ENCODE measurements at regions of chr4 and their contacts with region 1.

Region 1: DNA sequence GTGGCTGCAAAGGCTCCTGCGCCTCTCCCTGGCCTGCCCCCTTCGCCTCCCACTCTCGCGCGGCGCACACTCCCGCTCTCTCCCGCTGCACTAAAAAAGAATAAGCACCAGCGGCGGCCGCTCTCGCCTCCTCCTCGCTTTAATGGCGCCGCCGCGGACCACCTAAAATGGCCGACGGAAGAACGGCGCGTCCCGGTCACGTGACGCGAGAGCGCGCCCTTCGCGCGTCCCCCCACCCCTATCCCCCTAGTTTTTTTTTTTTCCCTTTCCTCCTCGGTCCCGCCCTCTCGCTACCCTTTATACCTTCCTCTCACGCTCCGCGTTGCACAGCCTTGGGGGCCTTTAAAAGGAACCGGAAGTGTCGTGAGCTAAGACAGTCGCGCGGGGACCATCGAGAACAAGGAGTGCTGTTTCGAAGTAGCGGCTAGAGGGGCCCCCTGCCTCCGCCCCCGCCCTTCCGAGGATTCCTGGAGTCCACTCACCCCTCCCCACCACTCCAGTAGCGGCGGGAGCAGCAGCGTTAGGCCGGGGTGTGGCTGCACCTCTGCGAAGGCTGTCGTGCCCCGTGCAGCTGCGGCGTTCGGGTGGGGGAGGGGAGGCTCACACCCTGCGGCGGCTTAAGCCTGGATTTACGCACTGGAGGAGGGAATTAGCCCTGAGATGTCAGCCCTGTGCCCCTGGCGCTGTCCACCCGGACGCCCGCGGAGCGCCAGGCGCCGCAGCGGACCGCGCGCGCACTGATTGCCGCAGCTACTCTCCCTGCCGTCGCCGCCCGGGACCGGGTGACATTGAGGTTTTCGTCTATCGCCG is at the start of gene HNRNPD:
- DNase-seq: peak; percentile 98 to 99
- ATAC-seq: peak; percentile 98
- H3K4me3 ChIP-seq: peak within 1 kb of the TSS; percentile 85 to 88
- H3K27ac ChIP-seq: peak within 1 kb of the TSS; percentile 78 to 84
- H3K4me1 ChIP-seq: no peaks in the 10 kb centered on the region
- H3K27me3 ChIP-seq: no peaks in the 10 kb centered on the region
- total RNA-seq, gene HNRNPD: 120 to 146 TPM

Region 2: GRCh38 chr4:82284858-82285805 is 88.9 kb before region 1 on chr4:
- intact Hi-C with region 1: loop called in 1 of 2 experiments (anchors 10 kb)
- DNase-seq: peak; percentile 100
- ATAC-seq: peak; percentile 100
- H3K4me3 ChIP-seq: peak overlapping the region in 1 of 2 donors; percentile 38
- H3K27ac ChIP-seq: no peak overlapping the region
- H3K4me1 ChIP-seq: no peaks in the 10 kb centered on the region
- H3K27me3 ChIP-seq: no peaks in the 10 kb centered on the region

Region 3: DNA sequence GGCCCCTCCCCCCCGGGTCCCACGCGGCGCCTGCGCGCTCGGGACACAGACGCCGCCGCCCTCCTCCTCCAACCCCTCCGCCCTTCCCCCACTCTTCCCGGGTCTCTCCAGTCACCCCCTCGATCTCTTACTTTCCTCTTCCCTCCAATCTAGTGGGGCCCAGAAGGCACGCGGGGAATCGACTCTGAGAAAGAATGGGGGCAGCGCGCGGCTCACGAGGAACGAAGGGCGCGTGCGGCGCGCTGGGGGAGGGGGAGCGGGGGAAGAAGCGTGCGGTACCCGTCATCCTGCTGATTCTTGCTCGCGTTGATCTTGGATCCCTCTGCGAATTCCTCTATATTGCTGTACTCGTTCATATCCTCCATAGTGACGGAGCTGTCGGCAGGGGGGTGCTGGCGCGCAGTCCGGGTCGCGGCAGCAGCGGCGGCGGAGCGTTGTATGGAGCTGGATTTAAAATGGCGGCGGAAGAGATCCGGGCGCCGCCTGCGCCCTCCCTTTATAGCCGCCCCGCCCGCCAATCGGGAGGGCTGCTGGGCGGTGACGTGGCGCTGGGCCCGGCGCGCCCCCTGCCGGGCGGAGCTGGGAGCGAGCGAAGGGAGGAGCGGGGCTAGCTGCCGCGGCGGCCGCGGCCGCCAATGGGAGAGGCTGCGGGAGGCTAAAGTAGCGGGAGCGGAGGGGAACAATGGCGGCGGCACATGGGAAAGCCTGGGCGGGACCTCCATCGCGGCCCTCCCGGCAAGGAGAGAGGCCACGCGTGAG is 55.1 kb after region 1 on chr4:
- intact Hi-C with region 1: loop called (anchors 1 to 2 kb)
- DNase-seq: peak; percentile 94 to 97
- ATAC-seq: peak; percentile 96
- H3K4me3 ChIP-seq: peak overlapping the region; percentile 90 to 93
- H3K27ac ChIP-seq: peak overlapping the region in 1 of 2 donors; percentile 97
- H3K4me1 ChIP-seq: peaks cover 0 to 6% of the 10 kb centered on the region in 2 donors
- H3K27me3 ChIP-seq: no peaks in the 10 kb centered on the region

Region 4: GRCh38 chr4:82500106-82500965 is 126.3 kb after region 1 on chr4:
- intact Hi-C with region 1: no loop called
- DNase-seq: no peak
- ATAC-seq: no peak
- H3K4me3 ChIP-seq: no peak overlapping the region
- H3K27ac ChIP-seq: no peak overlapping the region
- H3K4me1 ChIP-seq: no peaks in the 10 kb centered on the region
- H3K27me3 ChIP-seq: no peaks in the 10 kb centered on the region

Region 5: DNA sequence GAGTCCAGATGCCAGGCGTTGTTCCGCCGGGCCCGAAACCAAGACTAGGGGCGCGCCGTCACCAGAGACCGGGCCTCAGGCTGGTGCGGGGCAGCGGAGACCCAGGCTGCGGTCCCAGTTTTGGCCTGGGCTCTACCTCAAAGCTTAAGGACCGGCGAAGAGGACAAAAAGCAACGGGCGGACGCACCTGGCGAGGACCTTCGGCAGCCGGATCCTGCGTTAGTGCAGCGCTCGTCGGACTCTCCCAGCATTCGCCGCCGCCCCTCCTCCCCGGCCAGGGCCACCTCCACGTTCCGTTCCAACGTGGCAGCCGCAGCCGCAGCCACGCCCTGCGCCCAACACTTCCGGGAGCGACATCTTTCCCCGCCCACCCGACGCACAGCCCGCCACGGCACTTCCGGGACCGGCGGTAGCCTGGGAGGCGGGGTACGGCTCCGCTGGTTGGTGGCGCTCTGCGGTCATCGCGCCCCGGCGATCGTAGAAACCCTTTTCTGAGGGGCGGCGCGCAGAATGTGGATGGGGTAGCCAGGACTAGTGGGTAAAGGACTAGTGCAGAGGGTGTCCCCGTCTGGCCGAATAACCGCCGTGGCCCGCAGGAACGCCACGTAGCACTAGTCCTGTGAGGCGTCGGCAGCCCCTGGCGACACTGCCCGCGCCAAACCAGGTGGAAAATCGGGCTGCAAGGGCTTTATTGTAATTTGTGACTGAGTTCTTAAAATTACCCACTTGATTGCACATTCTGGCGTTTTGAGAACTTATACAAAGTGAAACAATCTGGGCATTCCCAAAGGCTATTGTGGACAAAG is 517.1 kb after region 1 on chr4 and contains the start of gene SEC31A:
- intact Hi-C with region 1: loop called in 1 of 2 experiments (anchors 10 kb)
- DNase-seq: peak; percentile 98 to 99
- ATAC-seq: peak; percentile 100
- H3K4me3 ChIP-seq: peak within 1 kb of the TSS; percentile 85 to 94
- H3K27ac ChIP-seq: peak within 1 kb of the TSS; percentile 86 to 99
- H3K4me1 ChIP-seq: peaks cover 0 to 1% of the 10 kb centered on the region in 2 donors
- H3K27me3 ChIP-seq: no peaks in the 10 kb centered on the region
- total RNA-seq, gene SEC31A: 297 to 338 TPM

Region 6: DNA sequence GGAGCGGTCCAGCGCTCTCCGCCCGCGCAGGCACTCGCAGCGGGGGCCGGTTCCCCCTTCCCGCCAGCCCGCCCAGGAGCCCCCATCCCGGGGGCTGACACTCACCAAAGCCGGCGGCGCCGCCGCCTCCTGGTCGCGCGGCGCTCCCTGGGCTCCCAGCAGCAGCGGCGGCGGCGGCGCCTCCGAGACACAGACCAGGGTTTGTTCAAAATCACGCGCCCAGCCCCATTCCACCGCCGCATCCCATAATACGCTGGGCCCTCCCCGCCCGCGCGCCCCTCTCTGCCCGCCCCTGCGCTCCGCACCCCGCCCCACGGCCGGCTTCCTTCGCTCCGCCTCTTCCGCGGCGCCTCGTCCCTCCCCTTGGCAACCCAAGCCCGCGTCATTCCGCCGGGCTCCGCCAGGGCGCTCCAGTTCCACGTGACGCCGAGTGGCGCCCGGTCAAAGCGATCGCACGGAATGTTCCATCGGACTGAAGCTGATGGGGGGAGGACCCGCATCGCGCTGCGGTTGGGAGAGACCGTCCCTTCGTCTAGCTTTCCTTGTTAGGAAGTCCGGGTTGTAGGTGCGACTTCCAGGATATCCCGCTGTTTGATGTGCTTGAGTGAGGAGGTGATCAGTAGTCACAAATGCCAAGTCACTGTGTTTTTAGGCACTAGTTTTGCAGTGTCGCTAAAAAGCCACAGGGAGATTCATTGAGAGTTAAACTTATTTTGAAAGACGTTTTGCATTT is 638.8 kb after region 1 on chr4:
- intact Hi-C with region 1: loop called (anchors 5 to 10 kb)
- DNase-seq: peak; percentile 98 to 99
- ATAC-seq: peak; percentile 99
- H3K4me3 ChIP-seq: peak overlapping the region; percentile 82 to 99
- H3K27ac ChIP-seq: peak overlapping the region; percentile 46 to 89
- H3K4me1 ChIP-seq: no peaks in the 10 kb centered on the region
- H3K27me3 ChIP-seq: no peaks in the 10 kb centered on the region

Region 7: GRCh38 chr4:83455281-83456129 is 1081.5 kb after region 1 on chr4 and contains the starts of genes HELQ and MRPS18C:
- intact Hi-C with region 1: loop called in 1 of 2 experiments (anchors 10 kb)
- DNase-seq: peak; percentile 96 to 98
- ATAC-seq: peak; percentile 98
- H3K4me3 ChIP-seq: peak within 1 kb of the TSS; percentile 93 to 96
- H3K27ac ChIP-seq: peak within 1 kb of the TSS; percentile 71 to 95
- H3K4me1 ChIP-seq: peaks cover 4 to 5% of the 10 kb centered on the region in 2 donors
- H3K27me3 ChIP-seq: no peaks in the 10 kb centered on the region
- total RNA-seq, gene HELQ: 11.6 to 17.0 TPM
- total RNA-seq, gene MRPS18C: 38.2 to 41.5 TPM